Endothelial cell of umbilical vein (primary cell): ENCODE measurements at regions of chr15 and their contacts with region 1.

Region 1: DNA sequence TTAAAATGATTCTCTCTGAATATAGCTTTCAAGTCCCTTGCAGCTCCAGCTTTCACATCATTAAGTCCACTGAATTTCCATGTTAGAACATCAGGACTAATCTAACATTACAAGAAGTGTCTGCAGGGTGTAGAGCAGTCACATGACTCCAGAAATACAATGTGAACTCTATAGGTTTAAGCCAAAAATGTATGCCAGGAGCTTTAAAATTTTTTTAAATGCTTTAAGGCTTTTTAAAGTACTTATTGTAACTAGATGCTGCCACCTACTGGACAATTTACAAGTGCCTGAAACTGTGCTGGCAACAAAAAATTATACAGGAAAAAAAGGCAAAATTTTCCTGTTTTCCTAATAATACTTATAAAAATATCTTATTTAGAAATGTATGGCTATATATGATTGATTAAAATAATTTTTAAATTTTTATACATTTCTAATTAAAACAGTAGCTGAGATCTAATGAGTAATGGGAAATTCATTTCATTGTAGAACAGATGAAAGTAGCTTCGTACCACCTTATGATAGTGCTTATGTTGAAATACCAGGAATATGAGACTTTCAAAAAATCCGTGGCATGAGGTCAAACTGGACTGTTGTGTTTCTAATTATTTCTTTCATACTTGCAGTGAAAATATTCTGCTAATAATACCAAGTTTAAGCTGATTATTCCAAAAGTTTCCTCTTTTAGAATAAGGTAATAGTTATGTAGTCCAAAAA is 25.7 kb downstream of the FSIP1 start:
- DNase-seq: peak; percentile 74
- H3K4me3 ChIP-seq: no peak overlapping the region
- H3K27ac ChIP-seq: no peak overlapping the region
- H3K4me1 ChIP-seq: no peaks in the 10 kb centered on the region
- H3K27me3 ChIP-seq: no peaks in the 10 kb centered on the region
- CTCF ChIP-seq: peak; percentile 49 to 51
- POLR2A ChIP-seq: no peak

Region 2: GRCh38 chr15:38699633-38700230 is 1057.2 kb before region 1 on chr15:
- CTCF ChIA-PET with region 1: interaction called, 10 read pairs
- POLR2A ChIA-PET with region 1: no interaction called
- dilution Hi-C with region 1: no loop called
- intact Hi-C with region 1: no loop called
- DNase-seq: peak; percentile 71
- H3K4me3 ChIP-seq: no peak overlapping the region
- H3K27ac ChIP-seq: no peak overlapping the region
- H3K4me1 ChIP-seq: no peaks in the 10 kb centered on the region
- H3K27me3 ChIP-seq: no peaks in the 10 kb centered on the region
- CTCF ChIP-seq: peak; percentile 79 to 94
- POLR2A ChIP-seq: no peak

Region 3: GRCh38 chr15:39171944-39172368 is 585.0 kb before region 1 on chr15:
- CTCF ChIA-PET with region 1: interaction called, 15 read pairs
- POLR2A ChIA-PET with region 1: no interaction called
- dilution Hi-C with region 1: no loop called
- intact Hi-C with region 1: loop called (anchors 2 kb)
- DNase-seq: peak; percentile 99
- H3K4me3 ChIP-seq: no peak overlapping the region
- H3K27ac ChIP-seq: peak overlapping the region; percentile 87
- H3K4me1 ChIP-seq: peaks cover 17% of the 10 kb centered on the region
- H3K27me3 ChIP-seq: no peaks in the 10 kb centered on the region
- CTCF ChIP-seq: peak; percentile 41 to 62
- POLR2A ChIP-seq: peak; percentile 30

Region 4: DNA sequence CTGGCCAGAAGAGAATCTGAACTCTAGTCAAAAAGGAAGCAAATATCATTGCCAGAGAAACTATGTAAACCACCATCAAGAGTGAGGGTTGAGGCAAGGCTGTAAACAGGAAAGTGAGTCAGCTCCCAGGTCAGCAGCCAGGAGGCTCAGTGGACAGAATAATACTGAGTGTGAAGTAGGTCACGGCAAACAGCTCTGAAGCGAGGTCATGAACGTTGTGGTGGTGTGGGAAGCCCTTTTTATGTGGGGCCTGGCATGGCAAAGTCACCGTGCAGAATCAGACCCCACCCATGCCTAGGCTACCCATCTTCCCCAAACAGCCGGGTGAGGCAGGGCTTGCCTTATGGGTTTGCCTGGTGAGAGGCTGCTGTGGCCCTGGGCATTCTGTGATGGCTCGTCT is 132.2 kb before region 1 on chr15:
- CTCF ChIA-PET with region 1: interaction called, 63 read pairs
- POLR2A ChIA-PET with region 1: no interaction called
- dilution Hi-C with region 1: no loop called
- intact Hi-C with region 1: no loop called
- DNase-seq: peak; percentile 98
- H3K4me3 ChIP-seq: no peak overlapping the region
- H3K27ac ChIP-seq: peak overlapping the region; percentile 87
- H3K4me1 ChIP-seq: peaks cover 49% of the 10 kb centered on the region
- H3K27me3 ChIP-seq: no peaks in the 10 kb centered on the region
- CTCF ChIP-seq: no peak
- POLR2A ChIP-seq: peak; percentile 76

Region 5: DNA sequence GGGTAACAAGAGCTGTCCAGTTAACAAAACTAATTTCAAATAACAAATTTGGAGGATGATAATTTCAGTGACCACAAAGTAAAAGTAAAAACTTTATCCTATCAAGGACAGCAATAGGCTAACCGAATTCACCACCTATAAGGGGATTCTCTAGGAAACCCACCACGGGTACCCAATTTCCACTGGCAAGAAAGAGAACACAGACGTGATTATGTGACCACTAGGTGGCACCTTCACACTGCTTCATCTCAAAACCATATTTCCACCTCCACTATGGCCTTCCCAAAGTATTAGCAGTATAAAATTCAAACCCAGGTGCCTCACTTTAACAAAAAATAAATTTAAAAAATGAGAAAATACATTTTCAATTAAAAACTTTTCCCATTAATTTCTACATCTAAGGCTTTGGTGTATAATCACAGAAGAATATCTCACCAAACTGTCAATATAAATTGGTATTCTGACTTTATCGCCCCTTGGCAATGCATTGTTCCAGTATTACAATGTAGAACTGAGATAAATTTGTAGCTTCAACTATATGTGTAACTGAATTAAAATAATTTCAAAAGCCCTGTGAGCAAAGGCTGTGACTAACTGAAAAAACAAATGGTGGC is 70.9 kb before region 1 on chr15:
- CTCF ChIA-PET with region 1: interaction called, 240 read pairs
- POLR2A ChIA-PET with region 1: no interaction called
- dilution Hi-C with region 1: no loop called
- intact Hi-C with region 1: loop called (anchors 1 kb)
- DNase-seq: peak; percentile 66
- H3K4me3 ChIP-seq: no peak overlapping the region
- H3K27ac ChIP-seq: no peak overlapping the region
- H3K4me1 ChIP-seq: no peaks in the 10 kb centered on the region
- H3K27me3 ChIP-seq: no peaks in the 10 kb centered on the region
- CTCF ChIP-seq: peak; percentile 61 to 64
- POLR2A ChIP-seq: no peak

Region 6: GRCh38 chr15:39720621-39721611 is 36.0 kb before region 1 on chr15:
- CTCF ChIA-PET with region 1: interaction called, 12 read pairs
- POLR2A ChIA-PET with region 1: no interaction called
- dilution Hi-C with region 1: no loop called
- intact Hi-C with region 1: no loop called
- DNase-seq: no peak
- H3K4me3 ChIP-seq: no peak overlapping the region
- H3K27ac ChIP-seq: no peak overlapping the region
- H3K4me1 ChIP-seq: no peaks in the 10 kb centered on the region
- H3K27me3 ChIP-seq: no peaks in the 10 kb centered on the region
- CTCF ChIP-seq: no peak
- POLR2A ChIP-seq: no peak